ENCODE measurements at regions of chr4 and their contacts with region 1.

Region 1: DNA sequence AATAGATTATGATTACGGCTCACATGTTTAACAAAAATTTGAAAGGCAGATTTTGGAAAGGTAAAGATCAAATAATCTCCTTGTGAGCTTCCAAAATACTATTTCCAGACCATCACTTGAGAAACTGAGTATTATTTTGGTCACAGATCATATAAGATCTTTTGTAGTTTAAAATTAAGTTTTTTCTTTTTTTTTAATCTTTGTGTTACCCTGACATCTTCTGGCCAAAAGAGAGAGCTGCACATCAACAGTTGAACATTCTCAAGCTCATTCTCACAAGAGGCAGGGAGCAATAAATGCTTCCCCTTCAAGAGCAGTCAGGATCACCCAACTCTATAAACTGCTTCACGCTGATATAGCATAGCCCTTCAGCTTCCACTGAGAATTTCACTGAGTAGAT is 15.9 kb downstream of the TMEM192 start:
- DNase-seq: no peak

Region 2: GRCh38 chr4:164768516-164768915 is 328.3 kb before region 1 on chr4:
- intact Hi-C with region 1: loop called (anchors 5 kb)
- DNase-seq: no peak

Region 3: GRCh38 chr4:165454417-165454816 is 357.6 kb after region 1 on chr4:
- intact Hi-C with region 1: no loop called
- DNase-seq: no peak

Measured in posterior cingulate gyrus (tissue), 11 donors.